SK-N-SH (cell line): ENCODE measurements at regions of chr14 and their contacts with region 1.

Region 1: GRCh38 chr14:99320105-99320572 is 48.1 kb upstream of the BCL11B start:
- DNase-seq: peak; percentile 84
- H3K4me3 ChIP-seq: peak overlapping the region in 1 of 2 experiments; percentile 39; a peak in 1 of 4 replicates
- H3K27ac ChIP-seq: no peak overlapping the region
- H3K4me1 ChIP-seq: no peaks in the 10 kb centered on the region; a peak in 1 of 4 replicates
- H3K27me3 ChIP-seq: peaks cover 28% of the 10 kb centered on the region
- CTCF ChIP-seq: peak; percentile 78
- EP300 ChIP-seq: no peak
- RAD21 ChIP-seq: peak; percentile 48

Region 2: GRCh38 chr14:99229654-99230207 is 90.4 kb before region 1 on chr14:
- CTCF ChIA-PET with region 1: no interaction called
- POLR2A ChIA-PET with region 1: no interaction called
- DNase-seq: no peak
- H3K4me3 ChIP-seq: no peak overlapping the region
- H3K27ac ChIP-seq: no peak overlapping the region
- H3K4me1 ChIP-seq: no peaks in the 10 kb centered on the region; a peak in 1 of 4 replicates
- H3K27me3 ChIP-seq: peaks cover 69% of the 10 kb centered on the region; the same call in 1 of the 2 replicates
- CTCF ChIP-seq: no peak
- EP300 ChIP-seq: no peak
- RAD21 ChIP-seq: no peak

Region 3: DNA sequence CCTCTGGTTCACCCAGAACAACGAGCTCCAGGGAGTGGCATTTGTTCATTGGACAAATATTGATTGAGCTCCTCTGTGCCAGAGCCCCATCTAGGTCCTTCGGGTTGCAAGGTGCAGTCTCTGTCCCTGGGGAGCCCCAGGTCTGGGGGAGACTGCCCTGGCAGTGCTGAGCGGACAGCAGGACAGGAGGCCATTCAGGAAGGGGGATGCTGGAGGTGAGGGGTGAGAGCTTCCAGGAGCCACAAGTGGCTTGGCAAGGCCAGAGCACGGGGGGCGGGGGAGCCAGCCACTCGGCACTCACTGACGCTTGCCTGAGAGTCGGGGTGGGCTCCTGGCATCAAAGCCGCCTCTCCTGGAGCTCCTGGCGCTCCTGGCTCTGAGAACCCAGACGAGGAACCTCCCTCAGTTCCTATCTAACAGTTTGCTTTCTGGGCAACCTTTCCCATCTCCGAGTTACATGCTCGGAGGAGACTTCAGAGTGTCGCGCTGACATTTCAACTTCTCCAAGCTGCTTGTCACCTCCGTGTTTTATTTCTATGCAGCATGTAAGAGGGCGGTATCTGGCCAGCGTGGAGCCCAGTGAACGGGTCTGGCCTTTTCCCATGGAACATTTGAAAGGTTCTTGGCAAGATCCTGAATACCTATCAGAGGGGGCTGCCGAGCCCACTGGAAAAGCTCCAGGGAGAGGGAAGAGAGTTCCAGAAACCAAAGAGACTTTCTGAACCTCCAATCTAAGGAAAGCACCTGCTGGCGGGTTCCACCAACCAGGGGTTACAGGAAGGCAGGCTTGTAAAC is 13.9 kb after region 1 on chr14:
- CTCF ChIA-PET with region 1: interaction called, 10 read pairs
- POLR2A ChIA-PET with region 1: no interaction called
- DNase-seq: no peak
- H3K4me3 ChIP-seq: no peak overlapping the region
- H3K27ac ChIP-seq: no peak overlapping the region
- H3K4me1 ChIP-seq: no peaks in the 10 kb centered on the region
- H3K27me3 ChIP-seq: peaks cover 62% of the 10 kb centered on the region; the same call in 1 of the 2 replicates
- CTCF ChIP-seq: no peak
- EP300 ChIP-seq: no peak
- RAD21 ChIP-seq: no peak

Region 4: DNA sequence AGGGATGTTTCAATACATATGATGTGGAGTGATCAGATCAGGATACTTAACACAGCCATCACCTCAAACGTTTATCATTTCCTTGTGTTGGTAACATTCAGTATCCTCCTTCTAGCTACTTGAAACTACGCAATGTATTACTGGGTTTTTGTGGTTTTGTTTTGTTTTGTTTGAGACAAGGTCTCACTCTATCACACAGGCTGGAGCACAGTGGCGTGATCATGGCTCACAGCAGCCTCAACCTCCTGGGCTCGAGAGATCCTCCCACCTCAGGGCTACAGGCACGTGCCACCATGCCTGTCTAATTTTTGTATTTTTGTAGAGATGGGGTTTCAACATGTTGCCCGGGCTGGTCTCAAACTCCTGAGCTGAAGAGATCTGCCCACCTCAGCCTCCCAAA is 22.1 kb after region 1 on chr14:
- CTCF ChIA-PET with region 1: interaction called, 12 read pairs
- POLR2A ChIA-PET with region 1: no interaction called
- DNase-seq: no peak
- H3K4me3 ChIP-seq: no peak overlapping the region
- H3K27ac ChIP-seq: no peak overlapping the region
- H3K4me1 ChIP-seq: no peaks in the 10 kb centered on the region
- H3K27me3 ChIP-seq: peaks cover 73% of the 10 kb centered on the region
- CTCF ChIP-seq: no peak
- EP300 ChIP-seq: no peak
- RAD21 ChIP-seq: no peak